ENCODE measurements at regions of chr6 and their contacts with region 1.

Region 1: GRCh38 chr6:167093922-167094432 is 28.9 kb upstream of the CCR6 start:
- DNase-seq: peak; percentile 84
- ATAC-seq: peak; percentile 48
- H3K4me3 Mint-ChIP-seq: peak overlapping the region; percentile 94
- H3K27ac Mint-ChIP-seq: peak overlapping the region; percentile 100
- H3K4me1 Mint-ChIP-seq: peaks cover 100% of the 10 kb centered on the region
- H3K27me3 Mint-ChIP-seq: no peaks in the 10 kb centered on the region
- CTCF ChIP-seq: no peak

Region 2: DNA sequence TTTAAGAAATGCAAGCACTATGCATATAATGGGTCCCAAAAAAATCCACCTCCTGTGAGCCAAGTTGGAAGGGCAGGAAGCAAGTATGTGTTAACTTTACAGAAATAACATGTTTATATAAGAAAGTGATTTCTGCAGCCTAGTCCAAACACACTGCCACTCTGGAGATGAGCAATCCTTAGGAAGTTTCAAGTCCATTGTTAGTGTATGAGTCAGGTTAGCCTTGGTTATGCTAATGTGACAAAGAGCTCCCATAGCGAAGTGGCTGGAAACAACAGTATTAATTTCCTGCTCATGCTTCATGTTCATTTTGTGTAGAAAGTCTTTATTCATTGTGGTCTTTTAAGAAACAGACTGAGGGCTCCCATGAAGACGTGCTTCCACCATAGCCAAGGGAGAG is 1047.8 kb before region 1 on chr6:
- CTCF ChIA-PET with region 1: no interaction called
- POLR2A ChIA-PET with region 1: no interaction called
- intact Hi-C with region 1: no loop called
- DNase-seq: no peak
- ATAC-seq: no peak
- H3K4me3 Mint-ChIP-seq: no peak overlapping the region
- H3K27ac Mint-ChIP-seq: no peak overlapping the region
- H3K4me1 Mint-ChIP-seq: no peaks in the 10 kb centered on the region
- H3K27me3 Mint-ChIP-seq: peaks cover 3% of the 10 kb centered on the region
- CTCF ChIP-seq: no peak

Region 3: GRCh38 chr6:166956444-166957086 is 137.4 kb before region 1 on chr6 and contains the start of gene RNASET2:
- CTCF ChIA-PET with region 1: interaction called, 4 read pairs
- POLR2A ChIA-PET with region 1: interaction called, 113 read pairs
- intact Hi-C with region 1: loop called (anchors 1 kb)
- DNase-seq: peak; percentile 100
- ATAC-seq: peak; percentile 82
- H3K4me3 Mint-ChIP-seq: peak within 1 kb of the TSS; percentile 91
- H3K27ac Mint-ChIP-seq: peak within 1 kb of the TSS; percentile 100
- H3K4me1 Mint-ChIP-seq: peaks cover 76% of the 10 kb centered on the region
- H3K27me3 Mint-ChIP-seq: no peaks in the 10 kb centered on the region
- CTCF ChIP-seq: no peak
- total RNA-seq, gene RNASET2: 118 and 135 TPM in 2 replicates

Region 4: GRCh38 chr6:167056370-167056769 is 37.6 kb before region 1 on chr6:
- CTCF ChIA-PET with region 1: interaction called, 3 read pairs
- POLR2A ChIA-PET with region 1: interaction called, 18 read pairs
- intact Hi-C with region 1: no loop called
- DNase-seq: no peak
- ATAC-seq: peak; percentile 93
- H3K4me3 Mint-ChIP-seq: no peak overlapping the region
- H3K27ac Mint-ChIP-seq: no peak overlapping the region
- H3K4me1 Mint-ChIP-seq: peaks cover 23% of the 10 kb centered on the region
- H3K27me3 Mint-ChIP-seq: no peaks in the 10 kb centered on the region
- CTCF ChIP-seq: no peak

Region 5: DNA sequence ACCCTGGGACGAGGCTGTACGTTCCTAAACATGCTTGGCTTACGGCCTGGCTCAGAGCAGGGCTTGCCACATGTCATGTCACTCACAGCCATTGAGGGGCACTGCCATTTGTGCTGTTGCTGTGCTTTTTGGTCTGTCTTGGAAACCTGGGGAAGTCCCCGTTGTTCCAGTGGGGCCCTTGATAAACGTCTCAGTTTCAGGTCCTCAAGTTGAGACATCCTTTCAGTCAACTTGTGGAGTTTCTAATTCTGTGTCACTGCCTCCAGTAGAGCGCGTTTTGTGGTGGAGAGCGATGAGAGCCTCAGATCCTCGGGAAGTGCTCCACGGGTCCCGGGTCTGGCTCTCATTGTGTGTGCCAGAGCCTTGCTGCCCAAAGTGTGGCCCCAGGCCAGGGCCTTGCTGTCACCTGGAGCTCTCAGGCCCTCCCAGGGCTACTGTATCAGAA is 14.1 kb before region 1 on chr6:
- CTCF ChIA-PET with region 1: interaction called, 7 read pairs
- POLR2A ChIA-PET with region 1: interaction called, 51 read pairs
- intact Hi-C with region 1: loop called (anchors 1 kb)
- DNase-seq: peak; percentile 65
- ATAC-seq: peak; percentile 99
- H3K4me3 Mint-ChIP-seq: peak overlapping the region; percentile 54
- H3K27ac Mint-ChIP-seq: peak overlapping the region; percentile 91
- H3K4me1 Mint-ChIP-seq: peaks cover 52% of the 10 kb centered on the region
- H3K27me3 Mint-ChIP-seq: no peaks in the 10 kb centered on the region
- CTCF ChIP-seq: peak; percentile 51

Region 6: GRCh38 chr6:167119670-167120381 is 25.8 kb after region 1 on chr6:
- CTCF ChIA-PET with region 1: interaction called, 44 read pairs
- POLR2A ChIA-PET with region 1: interaction called, 970 read pairs
- intact Hi-C with region 1: loop called (anchors 2 kb)
- DNase-seq: peak; percentile 19
- ATAC-seq: no peak
- H3K4me3 Mint-ChIP-seq: peak overlapping the region; percentile 91
- H3K27ac Mint-ChIP-seq: peak overlapping the region; percentile 89
- H3K4me1 Mint-ChIP-seq: peaks cover 95% of the 10 kb centered on the region
- H3K27me3 Mint-ChIP-seq: no peaks in the 10 kb centered on the region
- CTCF ChIP-seq: no peak

Region 7: DNA sequence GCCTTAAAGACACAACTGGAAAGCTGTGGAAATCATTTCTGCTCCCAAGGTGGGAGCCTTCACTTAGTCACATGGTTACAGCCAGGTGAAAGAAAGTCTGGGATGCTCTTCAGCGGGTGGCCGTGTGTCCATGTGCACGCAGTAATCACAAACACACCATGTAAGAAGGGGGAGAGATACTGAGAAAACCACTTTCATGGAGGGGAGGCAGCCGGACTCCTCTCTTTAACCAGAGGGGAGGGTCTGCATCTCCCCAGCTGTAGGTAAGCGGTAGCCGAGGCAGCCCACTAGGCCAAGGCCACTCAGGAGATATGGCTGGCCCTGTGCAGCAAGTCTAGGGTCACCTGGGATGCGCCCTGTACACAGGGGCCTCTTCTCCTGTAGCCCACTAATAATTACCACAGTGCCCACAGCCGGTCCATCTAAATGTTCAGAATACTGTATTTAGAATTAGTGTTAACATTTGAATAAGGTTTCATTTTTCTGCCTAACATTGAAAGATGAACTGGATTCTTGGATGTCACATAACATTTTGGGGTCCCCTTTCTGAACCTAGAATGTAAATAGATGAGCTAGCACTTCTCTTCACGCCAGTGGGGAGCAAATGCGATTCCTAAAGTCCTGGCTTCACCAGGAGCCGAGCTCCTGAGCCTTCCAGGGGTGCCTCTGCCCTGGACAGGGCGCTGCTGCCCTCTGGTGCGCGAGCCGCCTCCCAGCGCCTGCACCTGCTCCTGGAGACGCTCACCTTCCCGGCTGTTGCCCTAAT is 47.9 kb after region 1 on chr6:
- CTCF ChIA-PET with region 1: interaction called, 145 read pairs
- POLR2A ChIA-PET with region 1: interaction called, 970 read pairs
- intact Hi-C with region 1: loop called (anchors 1 kb)
- DNase-seq: peak; percentile 62
- ATAC-seq: peak; percentile 73
- H3K4me3 Mint-ChIP-seq: peak overlapping the region; percentile 46
- H3K27ac Mint-ChIP-seq: peak overlapping the region; percentile 79
- H3K4me1 Mint-ChIP-seq: peaks cover 61% of the 10 kb centered on the region
- H3K27me3 Mint-ChIP-seq: no peaks in the 10 kb centered on the region
- CTCF ChIP-seq: no peak

Measured in activated B cell treated with CpG ODN at 0.5 μM for 24 hours (primary cell).